Left ventricle myocardium superior (tissue), 1 donor: ENCODE measurements at regions of chr3 and their contacts with region 1.

Region 1: DNA sequence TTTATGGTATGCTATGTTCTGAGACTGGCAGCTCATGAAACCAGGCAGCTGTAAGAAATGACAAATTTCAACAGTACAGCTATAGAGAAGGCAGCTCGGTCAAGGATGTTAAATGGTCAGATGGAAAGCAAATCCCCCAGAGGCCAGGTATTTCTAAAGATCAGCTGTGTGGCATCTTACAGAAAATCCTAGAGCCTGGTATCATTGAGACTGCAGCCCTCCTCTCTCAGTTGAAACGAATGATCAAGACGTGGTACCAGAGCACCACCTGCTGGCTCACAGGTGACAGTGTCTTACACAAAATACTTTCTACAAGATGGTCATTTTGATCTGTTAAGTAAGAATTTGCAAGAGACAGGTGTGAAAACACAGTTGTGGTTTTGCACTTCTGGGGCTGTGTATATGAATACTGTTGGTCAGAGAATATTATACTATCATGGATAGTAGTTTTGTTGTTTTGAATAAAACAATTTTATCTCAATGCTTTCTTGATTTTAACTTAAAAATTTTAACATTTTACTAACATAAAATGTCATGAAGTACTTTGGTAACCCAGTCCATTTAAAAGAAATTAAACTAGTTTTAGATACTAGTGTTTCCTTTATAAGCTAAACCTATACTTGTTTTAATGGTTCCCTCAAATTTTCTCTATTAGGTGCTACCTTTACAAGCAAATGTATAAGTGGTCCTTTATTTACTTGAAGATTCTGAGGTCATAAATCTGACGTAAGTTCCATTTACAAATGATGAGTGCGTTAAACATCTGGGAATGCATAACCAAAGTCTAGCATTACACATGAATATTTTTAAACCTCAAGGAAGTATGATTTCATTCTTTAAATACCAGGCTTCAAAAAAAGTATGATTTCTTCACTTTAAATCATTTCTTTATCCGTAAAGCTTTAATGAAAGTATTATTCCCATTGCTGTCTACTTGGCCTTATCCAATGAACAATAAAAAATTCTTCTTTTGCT is 121.8 kb downstream of the PDZRN3 start:
- DNase-seq: peak; percentile 63
- ATAC-seq: peak; percentile 48

Region 2: DNA sequence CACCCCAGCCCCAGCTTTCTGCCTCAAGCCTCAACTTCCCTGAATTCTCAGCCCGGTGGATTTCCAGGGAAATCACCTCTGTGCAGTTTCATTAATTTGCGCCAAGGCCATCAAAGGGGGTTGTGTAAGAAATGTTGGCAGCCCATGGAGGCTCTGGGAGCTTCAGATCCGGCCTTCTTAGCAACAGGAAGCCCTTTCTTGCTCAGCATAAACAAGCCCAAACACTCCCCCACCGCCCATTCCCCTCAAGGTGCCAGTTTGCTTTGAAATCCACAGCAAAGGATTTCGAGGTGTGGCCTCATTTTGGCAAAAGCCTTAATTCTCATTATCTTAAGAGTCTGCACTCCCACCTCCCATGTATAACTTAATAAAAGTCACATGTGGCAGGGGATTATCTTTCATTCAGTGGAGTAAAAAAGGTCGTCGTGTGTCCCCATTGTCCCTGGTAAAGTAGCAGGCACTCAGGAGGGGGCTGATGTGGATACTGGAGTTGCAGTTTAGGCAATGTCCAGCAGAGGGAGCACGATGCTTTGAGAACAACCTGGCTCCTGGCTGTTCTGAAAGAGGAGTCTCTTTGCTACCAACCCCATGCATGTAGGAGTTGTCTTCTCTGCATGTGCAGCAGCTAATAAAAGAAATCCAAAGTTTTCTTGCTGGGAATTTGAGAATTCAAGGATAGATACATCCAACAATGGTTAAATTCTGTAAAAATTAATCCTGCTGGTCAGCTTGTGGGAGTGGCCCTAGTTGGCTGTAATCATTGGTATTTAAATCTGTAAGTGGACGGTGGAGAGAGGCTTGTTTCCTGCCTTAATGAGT is 401.9 kb before region 1 on chr3:
- intact Hi-C with region 1: loop called (anchors 5 kb)
- DNase-seq: peak; percentile 68
- ATAC-seq: peak; percentile 91

Region 3: DNA sequence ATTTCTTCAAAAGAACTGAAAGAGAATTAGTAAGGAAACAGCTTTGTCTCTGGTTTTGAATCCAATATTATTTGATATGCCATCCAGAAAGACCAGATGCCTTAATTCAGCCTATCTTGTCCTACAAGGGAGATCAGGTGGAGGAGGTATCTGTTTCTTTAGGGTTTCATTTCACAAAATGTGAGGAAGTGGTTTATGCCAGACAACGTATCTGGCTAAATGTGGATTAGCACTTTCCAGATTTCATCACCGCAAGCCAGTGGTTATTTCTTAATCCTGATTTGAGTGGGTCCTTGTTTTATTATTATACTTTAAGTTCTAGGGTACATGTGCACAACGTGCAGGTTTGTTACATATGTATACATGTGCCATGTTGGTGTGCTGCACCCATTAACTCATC is 170.3 kb before region 1 on chr3:
- intact Hi-C with region 1: no loop called
- DNase-seq: no peak
- ATAC-seq: no peak

Region 4: GRCh38 chr3:73848173-73848906 is 345.4 kb after region 1 on chr3:
- intact Hi-C with region 1: loop called (anchors 10 kb)
- DNase-seq: no peak
- ATAC-seq: peak; percentile 54